ENCODE measurements at regions of chr7 and their contacts with region 1.

Region 1: GRCh38 chr7:85875398-85875797 is 688.5 kb upstream of the SEMA3D start:
- DNase-seq: no peak
- CTCF ChIP-seq: no peak

Region 2: GRCh38 chr7:85529197-85529596 is 346.2 kb before region 1 on chr7:
- in situ Hi-C with region 1: no loop called
- DNase-seq: no peak
- CTCF ChIP-seq: no peak

Region 3: DNA sequence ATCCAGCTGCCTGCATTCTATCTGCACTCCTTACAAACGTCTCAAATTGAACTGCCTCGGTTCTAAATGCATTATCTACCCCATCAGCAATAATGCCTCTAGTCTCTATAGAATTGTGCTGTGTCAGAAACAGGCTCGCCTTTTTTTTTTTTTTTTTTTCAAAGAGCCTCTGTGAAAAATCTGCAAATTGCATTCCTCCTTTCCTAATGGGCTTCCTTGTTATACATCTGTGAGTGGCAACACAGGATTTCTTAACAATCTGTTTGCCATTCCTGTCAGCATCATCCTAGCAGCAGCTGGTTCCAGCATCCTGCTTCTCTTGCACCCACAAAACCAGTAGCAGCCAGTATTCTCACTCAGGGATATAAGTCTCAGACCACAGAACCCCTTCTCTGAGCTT is 275.0 kb before region 1 on chr7:
- in situ Hi-C with region 1: no loop called
- DNase-seq: no peak
- CTCF ChIP-seq: no peak

Region 4: DNA sequence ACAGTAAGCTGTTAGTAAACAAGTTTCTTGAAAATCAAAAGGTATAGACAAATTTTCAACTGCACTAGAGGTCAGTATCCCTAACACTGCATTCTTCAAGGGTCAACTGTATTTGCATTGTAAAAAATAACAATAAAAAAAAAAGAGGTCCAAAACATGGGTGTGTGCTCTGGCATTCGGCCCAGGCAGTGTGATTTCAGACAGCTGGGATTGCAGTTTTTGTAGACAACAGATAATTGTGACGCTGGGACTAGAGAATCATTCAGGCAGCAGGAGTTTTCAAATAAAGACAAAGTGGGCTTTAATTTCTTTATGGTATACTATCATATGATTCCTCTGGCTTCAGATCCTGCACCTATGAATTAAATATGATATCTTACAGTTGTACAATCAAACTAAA is 145.4 kb before region 1 on chr7:
- in situ Hi-C with region 1: no loop called
- DNase-seq: no peak
- CTCF ChIP-seq: no peak

Region 5: GRCh38 chr7:86469680-86470295 is 594.4 kb after region 1 on chr7:
- in situ Hi-C with region 1: loop called (anchors 10 kb)
- DNase-seq: peak; percentile 37
- CTCF ChIP-seq: peak; percentile 79